Spleen (tissue), 13 donors: ENCODE measurements at regions of chr4 and their contacts with region 1.

Region 1: DNA sequence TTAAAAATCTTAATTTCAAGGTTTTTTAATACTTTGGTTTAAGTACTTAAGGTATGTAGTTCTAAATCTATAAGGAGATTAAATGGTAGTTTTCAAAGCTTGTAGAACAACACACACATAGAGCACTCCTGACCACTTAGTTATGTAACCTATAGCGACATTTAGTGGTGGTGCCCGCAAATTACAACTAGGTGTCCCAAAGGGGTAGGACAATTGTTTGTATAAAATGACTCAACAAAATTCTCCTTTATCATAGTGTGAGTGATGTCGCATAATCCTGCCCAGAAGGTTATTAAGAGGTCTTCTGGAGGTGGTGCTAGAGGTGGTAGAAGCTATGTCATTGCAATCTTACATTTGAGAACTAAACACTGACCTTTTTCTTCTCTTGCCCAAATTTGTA is 373.0 kb upstream of the RASGEF1B start:
- DNase-seq: no peak
- H3K4me3 ChIP-seq: no peak overlapping the region
- H3K27ac ChIP-seq: no peak overlapping the region
- H3K4me1 ChIP-seq: peaks cover 0 to 7% (median 0%) of the 10 kb centered on the region in 6 donors
- H3K27me3 ChIP-seq: no peaks in the 10 kb centered on the region
- CTCF ChIP-seq: peak; percentile 61 to 88 (median 81)
- POLR2A ChIP-seq: no peak

Region 2: DNA sequence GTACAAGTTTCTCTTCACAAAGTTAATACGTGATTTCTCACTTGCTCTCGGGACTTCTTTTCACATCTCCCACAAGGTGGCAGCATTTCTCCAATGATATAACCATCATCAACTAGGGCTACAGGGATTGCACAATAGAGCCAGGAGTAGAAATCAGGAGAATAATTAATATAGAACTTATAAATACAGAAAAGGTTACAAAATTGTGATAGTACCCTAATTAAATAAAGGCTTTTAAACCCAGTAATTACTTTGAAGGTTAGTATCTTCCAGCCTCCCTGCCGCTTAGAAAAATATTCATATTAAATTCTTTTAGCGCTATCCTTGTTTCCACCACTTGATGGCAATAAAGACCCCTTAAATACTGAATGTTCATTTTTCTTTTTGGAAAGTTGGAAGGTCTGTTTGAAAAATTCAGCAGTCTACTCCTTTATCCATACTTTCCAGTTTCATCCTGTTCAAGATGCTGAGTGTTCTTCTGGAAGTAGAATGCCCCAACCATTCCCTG is 438.8 kb before region 1 on chr4:
- intact Hi-C with region 1: loop called (anchors 5 kb)
- DNase-seq: no peak
- H3K4me3 ChIP-seq: peak overlapping the region in 2 of 8 donors; percentile 18 to 37
- H3K27ac ChIP-seq: no peak overlapping the region
- H3K4me1 ChIP-seq: peaks cover 0 to 10% (median 6%) of the 10 kb centered on the region in 6 donors
- H3K27me3 ChIP-seq: no peaks in the 10 kb centered on the region
- CTCF ChIP-seq: peak in 10 of 11 experiments; percentile 62 to 87 (median 78)
- POLR2A ChIP-seq: no peak

Region 3: DNA sequence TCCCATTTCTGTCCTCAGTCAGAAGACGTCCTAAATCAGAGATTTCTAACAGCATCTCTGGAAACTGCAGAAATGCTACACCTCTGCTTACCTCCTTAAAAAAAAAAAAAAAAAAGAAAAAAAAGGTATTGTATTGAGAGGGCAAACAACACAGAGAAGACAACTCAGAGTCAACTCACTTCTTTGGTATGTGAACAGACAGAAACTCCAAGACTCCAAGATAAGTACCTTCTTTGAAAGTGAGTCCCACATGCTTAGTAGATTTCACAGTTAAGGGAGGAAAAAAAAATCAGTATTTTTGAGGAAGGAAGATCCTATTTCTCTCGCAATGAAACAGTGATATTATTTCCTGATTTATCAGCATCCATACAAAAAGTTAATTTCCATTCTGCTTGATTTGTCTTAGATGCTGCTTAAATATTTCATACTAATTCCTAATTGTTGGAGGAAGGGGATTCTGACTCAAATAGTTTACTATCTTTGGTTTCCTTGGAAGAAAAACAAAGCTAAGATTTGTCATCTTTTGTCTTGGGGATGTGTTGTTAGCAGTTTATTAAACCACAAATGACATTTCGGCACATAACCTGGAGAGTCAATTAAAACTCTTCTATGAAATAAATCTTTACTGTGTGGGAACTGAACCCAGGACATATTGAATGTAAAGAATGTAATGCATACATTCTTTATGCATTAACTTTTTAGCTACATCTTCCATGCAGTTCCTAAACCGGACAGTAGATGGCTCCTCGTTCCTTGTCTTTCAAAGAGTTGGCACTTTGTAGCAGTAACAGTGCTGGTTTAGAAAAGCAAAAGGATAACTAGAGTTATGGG is 377.7 kb before region 1 on chr4:
- intact Hi-C with region 1: loop called (anchors 5 kb)
- DNase-seq: no peak
- H3K4me3 ChIP-seq: peak overlapping the region in 1 of 8 donors; percentile 38
- H3K27ac ChIP-seq: peak overlapping the region in 1 of 8 donors; percentile 9
- H3K4me1 ChIP-seq: peaks cover 0 to 91% (median 60%) of the 10 kb centered on the region in 6 donors
- H3K27me3 ChIP-seq: no peaks in the 10 kb centered on the region
- CTCF ChIP-seq: peak; percentile 76 to 95 (median 87)
- POLR2A ChIP-seq: no peak

Region 4: DNA sequence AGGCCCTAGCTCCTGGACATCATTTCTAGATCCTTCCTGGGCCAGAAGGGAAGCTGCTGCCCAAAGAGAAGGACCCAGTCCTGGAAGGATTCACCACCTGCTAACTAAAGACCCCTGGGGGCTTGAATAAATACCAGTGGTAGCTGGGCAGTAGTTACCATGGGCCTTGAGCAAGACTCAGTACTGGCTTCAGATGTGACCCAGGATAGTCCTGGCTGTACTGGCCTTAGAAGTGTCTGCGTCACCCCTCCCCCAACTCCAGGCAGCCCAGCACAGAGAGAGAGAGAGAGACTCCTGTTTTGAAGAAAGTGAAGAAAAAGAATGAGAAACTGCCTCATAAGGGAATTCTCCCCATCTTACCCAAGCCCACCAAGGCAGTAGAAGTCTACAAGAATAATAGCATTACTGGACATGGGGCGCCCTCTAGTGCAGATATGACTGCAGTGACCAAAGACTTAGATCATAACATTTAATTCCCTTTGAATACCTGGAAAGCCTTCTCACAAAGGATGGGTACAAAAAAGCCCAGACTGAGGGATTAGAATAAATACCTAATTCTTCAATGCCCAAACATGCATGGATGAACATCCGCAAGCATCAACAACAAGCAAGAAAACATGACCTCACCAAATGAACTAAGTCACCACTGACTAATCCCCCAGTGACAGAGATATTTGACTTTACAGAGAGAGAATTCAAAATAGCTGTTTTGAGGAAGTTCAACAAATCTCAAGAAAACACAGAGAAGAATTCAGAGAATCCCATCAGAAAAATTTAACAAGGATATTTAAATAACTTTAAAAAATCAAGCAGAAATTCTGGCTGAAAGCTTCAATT is 357.3 kb after region 1 on chr4:
- intact Hi-C with region 1: loop called (anchors 10 kb)
- DNase-seq: no peak
- H3K4me3 ChIP-seq: no peak overlapping the region
- H3K27ac ChIP-seq: no peak overlapping the region
- H3K4me1 ChIP-seq: no peaks in the 10 kb centered on the region
- H3K27me3 ChIP-seq: no peaks in the 10 kb centered on the region
- CTCF ChIP-seq: peak in 10 of 11 experiments; percentile 41 to 64 (median 59)
- POLR2A ChIP-seq: no peak

Region 5: GRCh38 chr4:82268050-82268825 is 423.5 kb after region 1 on chr4:
- intact Hi-C with region 1: loop called (anchors 10 kb)
- DNase-seq: no peak
- H3K4me3 ChIP-seq: no peak overlapping the region
- H3K27ac ChIP-seq: peak overlapping the region in 3 of 8 donors; percentile 19 to 30 (median 21)
- H3K4me1 ChIP-seq: peaks cover 0 to 34% (median 12%) of the 10 kb centered on the region in 6 donors
- H3K27me3 ChIP-seq: no peaks in the 10 kb centered on the region
- CTCF ChIP-seq: peak in 10 of 11 experiments; percentile 40 to 76 (median 68)
- POLR2A ChIP-seq: no peak